Heart left ventricle (tissue), 16 donors: ENCODE measurements at regions of chr16 and their contacts with region 1.

Region 1: DNA sequence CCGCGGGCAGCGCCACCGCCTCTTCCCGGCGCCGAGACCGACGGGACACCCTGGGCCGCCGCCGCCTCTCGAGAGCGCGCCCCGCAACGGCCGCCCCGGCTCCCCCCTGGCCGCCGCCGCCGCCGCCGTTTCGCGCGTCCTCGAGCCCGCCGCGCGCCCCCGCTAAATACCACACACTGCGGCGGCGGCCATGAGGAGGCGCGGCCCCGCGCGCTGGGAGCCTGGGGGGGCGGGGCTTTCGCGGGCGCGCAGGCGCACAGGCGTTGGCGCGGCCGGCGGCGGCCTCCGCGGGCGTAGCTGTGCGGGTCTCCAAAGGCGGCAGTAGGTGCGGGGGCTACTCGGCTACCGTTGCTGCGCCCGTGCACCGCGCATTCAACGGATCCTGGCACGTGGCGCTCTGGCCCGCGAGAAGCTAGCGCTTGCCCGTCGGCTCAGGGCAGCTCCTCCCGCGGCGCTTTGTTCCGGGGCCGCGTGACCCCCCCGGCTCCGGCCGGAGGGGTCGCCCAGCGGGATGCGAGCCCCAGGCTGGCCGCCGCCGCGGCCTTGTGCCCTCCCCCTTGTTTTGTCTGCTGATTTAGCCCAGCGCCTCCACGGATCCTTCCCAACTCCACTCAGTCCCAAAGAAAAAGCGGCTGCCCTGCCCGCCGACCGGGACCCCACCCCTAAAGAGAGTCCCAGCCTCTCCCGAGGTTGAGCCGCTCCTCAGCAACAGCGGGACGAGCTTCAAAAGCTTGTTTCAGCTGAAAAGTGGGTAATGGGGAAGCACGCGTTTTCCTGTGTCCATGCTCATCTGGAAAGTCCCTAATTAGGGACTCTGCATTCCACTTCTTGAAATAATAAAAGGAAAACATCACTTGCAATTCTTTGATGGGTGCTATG is at the start of gene SIAH1:
- DNase-seq: peak; percentile 86 to 93 (median 89)
- ATAC-seq: peak; percentile 79 to 95 (median 93)
- H3K4me3 ChIP-seq: peak within 1 kb of the TSS; percentile 85 to 99 (median 95)
- H3K27ac ChIP-seq: peak within 1 kb of the TSS; percentile 97 to 100 (median 99)
- H3K4me1 ChIP-seq: peaks cover 6 to 50% (median 24%) of the 10 kb centered on the region in 12 donors
- H3K27me3 ChIP-seq: no peaks in the 10 kb centered on the region
- CTCF ChIP-seq: no peak
- POLR2A ChIP-seq: peak; percentile 55 to 87
- total RNA-seq, gene SIAH1: 10.9 to 21.5 (median 15.5) TPM

Region 2: DNA sequence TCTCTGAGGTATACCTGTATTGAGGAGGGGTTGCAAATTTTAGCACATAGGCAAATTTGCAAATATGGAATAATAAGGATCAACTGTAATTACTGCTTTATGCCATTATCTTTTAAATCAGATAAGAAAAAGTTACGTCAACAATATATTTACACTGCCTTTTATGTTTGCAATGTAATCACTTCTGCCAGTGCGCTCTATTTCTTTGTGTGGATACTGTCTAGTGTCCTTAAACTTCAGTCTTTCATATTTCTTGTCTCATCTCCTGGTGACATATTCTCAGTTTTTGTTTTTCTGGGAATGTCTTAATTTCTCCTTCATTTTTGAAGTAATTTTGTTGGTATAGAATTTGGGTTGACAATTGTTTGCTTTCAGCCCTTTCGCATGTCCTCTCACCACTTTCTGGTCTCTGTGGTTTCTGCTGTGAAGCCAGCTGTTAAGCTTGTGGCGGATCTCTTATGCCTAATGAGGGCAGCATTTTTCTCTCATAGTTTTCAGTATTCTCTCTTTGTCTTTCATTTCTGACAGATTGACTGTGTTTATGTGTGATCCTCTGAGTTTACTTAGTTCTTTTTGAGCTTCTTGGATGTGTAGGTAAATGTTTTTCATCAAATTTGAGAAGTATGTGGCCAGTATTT is 100.6 kb before region 1 on chr16:
- intact Hi-C with region 1: no loop called
- DNase-seq: no peak
- ATAC-seq: no peak
- H3K4me3 ChIP-seq: no peak overlapping the region
- H3K27ac ChIP-seq: no peak overlapping the region
- H3K4me1 ChIP-seq: peaks cover 3 to 34% (median 23%) of the 10 kb centered on the region in 12 donors
- H3K27me3 ChIP-seq: no peaks in the 10 kb centered on the region
- CTCF ChIP-seq: no peak
- POLR2A ChIP-seq: no peak

Region 3: GRCh38 chr16:48365581-48366164 is 19.8 kb before region 1 on chr16:
- intact Hi-C with region 1: loop called in 3 of 10 experiments (anchors 1 to 2 kb)
- DNase-seq: peak; percentile 90 to 95 (median 93)
- ATAC-seq: peak; percentile 98 to 100 (median 100)
- H3K4me3 ChIP-seq: peak overlapping the region; percentile 38 to 70 (median 61)
- H3K27ac ChIP-seq: peak overlapping the region; percentile 43 to 90 (median 75)
- H3K4me1 ChIP-seq: peaks cover 3 to 64% (median 41%) of the 10 kb centered on the region in 12 donors
- H3K27me3 ChIP-seq: no peaks in the 10 kb centered on the region
- CTCF ChIP-seq: peak in 4 of 12 donors; percentile 15 to 36 (median 23)
- POLR2A ChIP-seq: peak; percentile 69 to 97